ENCODE measurements at regions of chr2 and their contacts with region 1.

Region 1: GRCh38 chr2:222973237-222973636 is 78.8 kb upstream of the KCNE4 start:
- DNase-seq: no peak
- H3K4me3 ChIP-seq: no peak overlapping the region
- H3K27me3 ChIP-seq: no peaks in the 10 kb centered on the region
- CTCF ChIP-seq: no peak

Region 2: DNA sequence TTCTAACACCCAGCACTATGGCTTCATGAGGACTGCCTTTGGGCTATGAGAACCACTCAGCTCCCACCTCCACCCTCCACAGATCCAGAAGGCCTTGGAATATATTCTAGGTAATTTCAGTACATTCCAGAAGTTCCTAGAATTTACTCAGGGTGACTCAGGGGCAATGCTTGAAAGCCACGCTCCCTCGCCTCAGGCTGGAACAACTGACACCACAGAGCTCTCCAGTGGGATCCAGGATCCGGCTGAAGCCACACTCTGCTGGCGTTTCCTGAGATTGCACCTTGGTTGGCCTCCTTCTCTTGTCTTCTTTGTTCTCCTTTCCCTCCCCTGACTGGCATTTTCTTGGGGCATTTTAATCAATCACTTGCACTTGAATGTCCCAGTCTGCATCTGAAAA is 13.9 kb before region 1 on chr2:
- CTCF ChIA-PET with region 1: interaction called, 20 read pairs
- POLR2A ChIA-PET with region 1: no interaction called
- DNase-seq: peak; percentile 75
- H3K4me3 ChIP-seq: no peak overlapping the region
- H3K27me3 ChIP-seq: no peaks in the 10 kb centered on the region
- CTCF ChIP-seq: peak; percentile 74

Region 3: GRCh38 chr2:223101340-223102039 is 128.3 kb after region 1 on chr2:
- CTCF ChIA-PET with region 1: interaction called, 28 read pairs
- POLR2A ChIA-PET with region 1: no interaction called
- DNase-seq: no peak
- H3K4me3 ChIP-seq: no peak overlapping the region
- H3K27me3 ChIP-seq: no peaks in the 10 kb centered on the region
- CTCF ChIP-seq: peak; percentile 55

Measured in BJ (cell line).